Mammary epithelial cell (primary cell): ENCODE measurements at regions of chr4 and their contacts with region 1.

Region 1: GRCh38 chr4:179307297-179308136 is 1865.3 kb upstream of the AGA start:
- DNase-seq: peak; percentile 15
- H3K4me3 ChIP-seq: no peak overlapping the region
- H3K27ac ChIP-seq: no peak overlapping the region
- H3K4me1 ChIP-seq: no peaks in the 10 kb centered on the region
- H3K27me3 ChIP-seq: no peaks in the 10 kb centered on the region
- CTCF ChIP-seq: peak; percentile 74 to 77

Region 2: DNA sequence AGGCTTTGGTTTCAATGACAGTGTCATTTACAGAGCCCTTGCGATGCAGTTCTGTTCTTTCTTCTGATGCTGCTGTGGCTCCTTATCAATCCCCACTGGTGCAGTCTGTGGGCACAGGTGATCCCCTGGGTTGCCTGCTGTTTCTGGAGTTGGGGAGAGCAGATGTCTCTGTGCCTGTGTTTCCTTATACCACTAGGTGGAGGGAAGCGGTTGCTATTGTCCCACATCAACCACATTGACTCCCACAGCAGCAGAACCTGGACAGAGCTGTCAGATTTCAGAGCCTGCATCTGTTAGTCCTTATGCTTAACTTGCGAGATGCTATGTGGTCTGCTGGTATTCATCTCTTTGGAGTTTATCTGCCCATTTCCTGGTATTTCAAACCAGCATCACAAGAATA is 1940.2 kb before region 1 on chr4:
- CTCF ChIA-PET with region 1: no interaction called
- dilution Hi-C with region 1: no loop called
- in situ Hi-C with region 1: no loop called
- intact Hi-C with region 1: loop called (anchors 5 kb)
- DNase-seq: peak; percentile 12
- H3K4me3 ChIP-seq: no peak overlapping the region
- H3K27ac ChIP-seq: no peak overlapping the region
- H3K4me1 ChIP-seq: no peaks in the 10 kb centered on the region
- H3K27me3 ChIP-seq: no peaks in the 10 kb centered on the region
- CTCF ChIP-seq: peak; percentile 10 to 42

Region 3: DNA sequence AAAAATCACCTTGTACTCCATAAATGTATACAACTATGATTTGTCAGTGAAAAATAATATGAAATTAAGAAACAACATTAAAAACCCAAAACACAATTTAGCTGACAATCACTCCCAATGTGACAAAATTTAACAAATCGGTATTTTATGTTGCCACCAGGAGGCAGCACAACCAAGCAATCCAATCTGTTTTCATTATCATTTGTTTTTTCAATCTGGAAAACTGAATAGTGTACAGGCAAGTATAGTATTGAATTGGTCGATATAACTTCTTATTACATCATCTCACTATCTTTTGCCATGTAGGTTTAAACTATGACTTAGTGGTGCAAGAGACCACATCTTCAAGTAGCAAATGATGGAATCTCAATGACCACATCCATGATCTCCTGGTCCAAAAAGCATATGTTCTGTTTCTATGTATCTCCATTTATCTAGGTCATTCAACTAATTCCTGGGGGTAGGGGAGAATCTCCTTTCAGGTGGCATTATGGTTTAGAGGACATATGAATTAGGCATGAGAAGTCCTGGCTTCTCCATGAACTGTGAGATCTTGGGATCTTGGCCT is 1752.4 kb before region 1 on chr4:
- CTCF ChIA-PET with region 1: interaction called, 3 read pairs
- dilution Hi-C with region 1: no loop called
- in situ Hi-C with region 1: no loop called
- intact Hi-C with region 1: loop called (anchors 1 kb)
- DNase-seq: peak; percentile 16
- H3K4me3 ChIP-seq: no peak overlapping the region
- H3K27ac ChIP-seq: no peak overlapping the region
- H3K4me1 ChIP-seq: no peaks in the 10 kb centered on the region
- H3K27me3 ChIP-seq: no peaks in the 10 kb centered on the region
- CTCF ChIP-seq: peak; percentile 63 to 69

Region 4: GRCh38 chr4:177573505-177573904 is 1734.0 kb before region 1 on chr4:
- CTCF ChIA-PET with region 1: no interaction called
- dilution Hi-C with region 1: no loop called
- in situ Hi-C with region 1: loop called in 1 of 2 experiments (anchors 10 kb)
- intact Hi-C with region 1: no loop called
- DNase-seq: peak; percentile 88
- H3K4me3 ChIP-seq: no peak overlapping the region
- H3K27ac ChIP-seq: no peak overlapping the region
- H3K4me1 ChIP-seq: peaks cover 4% of the 10 kb centered on the region
- H3K27me3 ChIP-seq: no peaks in the 10 kb centered on the region
- CTCF ChIP-seq: no peak

Region 5: DNA sequence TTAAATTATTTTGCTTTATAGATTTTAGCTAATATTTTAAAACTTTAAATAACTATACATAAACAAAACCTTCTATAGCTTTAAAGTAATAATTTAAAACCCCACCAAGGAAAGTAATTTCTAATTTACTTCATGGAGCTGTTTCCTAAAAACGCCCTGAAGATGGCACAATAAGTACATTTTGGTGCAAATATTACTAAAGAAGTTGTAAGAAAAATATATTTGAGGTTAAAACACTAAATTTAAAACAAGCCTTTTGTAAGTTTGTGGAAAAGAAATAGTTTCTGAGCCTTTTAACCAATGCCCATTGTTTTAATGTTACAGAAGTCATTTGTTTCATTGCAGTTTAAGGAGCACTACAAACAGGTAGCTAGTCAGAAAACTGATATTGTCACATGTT is 1727.9 kb before region 1 on chr4:
- CTCF ChIA-PET with region 1: no interaction called
- dilution Hi-C with region 1: no loop called
- in situ Hi-C with region 1: loop called in 1 of 2 experiments (anchors 10 kb)
- intact Hi-C with region 1: loop called (anchors 1 kb)
- DNase-seq: no peak
- H3K4me3 ChIP-seq: no peak overlapping the region
- H3K27ac ChIP-seq: no peak overlapping the region
- H3K4me1 ChIP-seq: no peaks in the 10 kb centered on the region
- H3K27me3 ChIP-seq: no peaks in the 10 kb centered on the region
- CTCF ChIP-seq: peak; percentile 20 to 26

Region 6: GRCh38 chr4:179415037-179415846 is 107.7 kb after region 1 on chr4:
- CTCF ChIA-PET with region 1: no interaction called
- dilution Hi-C with region 1: no loop called
- in situ Hi-C with region 1: no loop called
- intact Hi-C with region 1: no loop called
- DNase-seq: no peak
- H3K4me3 ChIP-seq: no peak overlapping the region
- H3K27ac ChIP-seq: no peak overlapping the region
- H3K4me1 ChIP-seq: no peaks in the 10 kb centered on the region
- H3K27me3 ChIP-seq: no peaks in the 10 kb centered on the region
- CTCF ChIP-seq: no peak